Caco-2 (cell line): ENCODE measurements at regions of chr14 and their contacts with region 1.

Region 1: GRCh38 chr14:49867831-49868723 is 15.5 kb upstream of the NEMF start:
- DNase-seq: peak; percentile 94 to 97
- H3K4me3 ChIP-seq: peak overlapping the region; percentile 47
- H3K4me3 Mint-ChIP-seq: peak overlapping the region; percentile 95
- H3K27ac Mint-ChIP-seq: peak overlapping the region; percentile 89
- H3K4me1 ChIP-seq: peaks cover 11% of the 10 kb centered on the region
- H3K4me1 Mint-ChIP-seq: peaks cover 5% of the 10 kb centered on the region
- H3K27me3 ChIP-seq: no peaks in the 10 kb centered on the region
- H3K27me3 Mint-ChIP-seq: no peaks in the 10 kb centered on the region
- CTCF ChIP-seq: no peak

Region 2: DNA sequence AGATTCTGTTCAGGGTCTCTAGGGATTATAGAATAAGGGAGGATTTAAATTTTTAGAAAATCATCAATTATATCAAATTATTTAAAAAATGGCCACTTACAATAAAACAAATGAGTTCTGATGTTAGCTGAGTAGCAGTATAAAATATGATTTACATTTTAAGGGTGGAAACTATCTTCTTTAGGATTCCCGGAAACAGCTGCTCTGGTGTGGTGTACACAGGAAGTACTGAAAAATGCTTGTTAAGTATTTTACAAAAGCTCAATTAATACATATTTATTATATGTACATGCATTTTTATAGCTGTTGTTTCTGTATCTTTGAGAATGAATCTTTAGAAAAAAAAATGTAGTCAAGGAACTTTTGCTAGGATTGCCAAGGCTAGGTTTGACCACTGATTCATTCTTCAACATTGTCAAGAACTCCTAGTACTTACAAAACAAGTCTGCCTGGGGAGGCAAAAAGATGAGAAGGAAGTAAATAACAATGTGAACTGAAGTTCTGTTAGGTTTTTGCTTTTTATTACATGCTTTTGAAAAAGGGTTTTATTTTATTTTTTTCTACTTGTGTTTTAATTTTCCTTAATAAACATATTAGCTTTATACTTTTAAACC is 72.8 kb after region 1 on chr14:
- CTCF ChIA-PET with region 1: no interaction called
- POLR2A ChIA-PET with region 1: no interaction called
- intact Hi-C with region 1: no loop called
- DNase-seq: no peak
- H3K4me3 ChIP-seq: no peak overlapping the region
- H3K4me3 Mint-ChIP-seq: no peak overlapping the region
- H3K27ac Mint-ChIP-seq: no peak overlapping the region
- H3K4me1 ChIP-seq: peaks cover 11% of the 10 kb centered on the region
- H3K4me1 Mint-ChIP-seq: peaks cover 8% of the 10 kb centered on the region
- H3K27me3 ChIP-seq: no peaks in the 10 kb centered on the region
- H3K27me3 Mint-ChIP-seq: no peaks in the 10 kb centered on the region
- CTCF ChIP-seq: no peak

Region 3: GRCh38 chr14:50109342-50109741 is 241.3 kb after region 1 on chr14:
- CTCF ChIA-PET with region 1: interaction called, 8 read pairs
- POLR2A ChIA-PET with region 1: interaction called, 13 read pairs
- intact Hi-C with region 1: loop called (anchors 1 kb)
- DNase-seq: peak in 1 of 2 experiments; percentile 40
- H3K4me3 ChIP-seq: no peak overlapping the region
- H3K4me3 Mint-ChIP-seq: no peak overlapping the region
- H3K27ac Mint-ChIP-seq: no peak overlapping the region
- H3K4me1 ChIP-seq: peaks cover 3% of the 10 kb centered on the region; the same call in 1 of the 2 replicates
- H3K4me1 Mint-ChIP-seq: no peaks in the 10 kb centered on the region
- H3K27me3 ChIP-seq: no peaks in the 10 kb centered on the region
- H3K27me3 Mint-ChIP-seq: no peaks in the 10 kb centered on the region
- CTCF ChIP-seq: peak; percentile 50 to 57

Region 4: GRCh38 chr14:50128225-50128624 is 260.1 kb after region 1 on chr14:
- CTCF ChIA-PET with region 1: no interaction called
- POLR2A ChIA-PET with region 1: no interaction called
- intact Hi-C with region 1: no loop called
- DNase-seq: no peak
- H3K4me3 ChIP-seq: no peak overlapping the region
- H3K4me3 Mint-ChIP-seq: no peak overlapping the region
- H3K27ac Mint-ChIP-seq: no peak overlapping the region
- H3K4me1 ChIP-seq: no peaks in the 10 kb centered on the region
- H3K4me1 Mint-ChIP-seq: no peaks in the 10 kb centered on the region
- H3K27me3 ChIP-seq: no peaks in the 10 kb centered on the region
- H3K27me3 Mint-ChIP-seq: no peaks in the 10 kb centered on the region
- CTCF ChIP-seq: no peak